PC-9 (cell line): ENCODE measurements at regions of chr16 and their contacts with region 1.

Region 1: GRCh38 chr16:23060458-23061320 is 88.6 kb downstream of the USP31 start:
- DNase-seq: peak; percentile 66 to 67
- H3K4me3 ChIP-seq: no peak overlapping the region
- H3K27ac ChIP-seq: no peak overlapping the region
- H3K4me1 ChIP-seq: no peaks in the 10 kb centered on the region
- H3K27me3 ChIP-seq: no peaks in the 10 kb centered on the region; the same call in 1 of the 2 replicates
- CTCF ChIP-seq: peak; percentile 85

Region 2: DNA sequence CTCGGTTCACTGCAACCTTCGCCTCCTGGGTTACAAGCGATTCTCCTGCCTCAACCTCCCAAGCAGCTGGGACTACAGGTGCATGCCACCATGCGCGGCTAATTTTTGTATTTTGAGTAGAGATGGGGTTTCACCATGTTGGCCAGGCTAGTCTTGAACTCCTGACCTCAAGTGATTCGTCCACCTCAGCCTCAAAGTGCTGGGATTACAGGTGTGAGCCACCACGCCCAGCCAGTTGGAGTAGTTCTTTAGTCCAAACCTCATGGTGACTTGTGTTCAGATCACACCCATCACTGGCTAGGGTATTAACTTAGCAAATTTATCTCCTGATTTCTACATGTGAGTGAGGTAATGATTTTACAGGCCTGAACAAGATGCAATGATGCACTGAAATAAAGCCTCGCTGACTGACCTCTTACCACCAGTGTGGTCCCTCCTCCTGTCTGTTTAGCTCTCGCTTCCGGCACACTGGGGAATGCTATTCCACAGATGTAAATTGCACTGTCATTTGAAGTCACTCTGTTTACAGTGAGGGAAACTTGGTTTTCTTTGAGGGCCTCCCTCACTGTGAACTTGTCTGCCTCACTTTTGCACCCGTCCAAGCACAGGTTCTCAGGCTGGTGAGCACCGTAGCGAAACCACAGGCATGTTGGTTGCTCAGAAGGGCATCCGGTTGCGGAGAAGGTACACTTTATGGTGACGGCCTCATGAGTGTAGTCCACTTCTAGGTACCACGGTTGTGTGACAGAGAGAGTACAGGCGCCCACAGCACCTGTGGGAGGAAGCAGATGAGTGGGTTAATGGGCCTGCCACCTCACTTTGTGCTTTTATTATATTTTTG is 1413.7 kb before region 1 on chr16:
- CTCF ChIA-PET with region 1: no interaction called
- POLR2A ChIA-PET with region 1: no interaction called
- intact Hi-C with region 1: loop called (anchors 5 kb)
- DNase-seq: no peak
- H3K4me3 ChIP-seq: no peak overlapping the region
- H3K27ac ChIP-seq: no peak overlapping the region
- H3K4me1 ChIP-seq: no peaks in the 10 kb centered on the region
- H3K27me3 ChIP-seq: no peaks in the 10 kb centered on the region
- CTCF ChIP-seq: no peak

Region 3: DNA sequence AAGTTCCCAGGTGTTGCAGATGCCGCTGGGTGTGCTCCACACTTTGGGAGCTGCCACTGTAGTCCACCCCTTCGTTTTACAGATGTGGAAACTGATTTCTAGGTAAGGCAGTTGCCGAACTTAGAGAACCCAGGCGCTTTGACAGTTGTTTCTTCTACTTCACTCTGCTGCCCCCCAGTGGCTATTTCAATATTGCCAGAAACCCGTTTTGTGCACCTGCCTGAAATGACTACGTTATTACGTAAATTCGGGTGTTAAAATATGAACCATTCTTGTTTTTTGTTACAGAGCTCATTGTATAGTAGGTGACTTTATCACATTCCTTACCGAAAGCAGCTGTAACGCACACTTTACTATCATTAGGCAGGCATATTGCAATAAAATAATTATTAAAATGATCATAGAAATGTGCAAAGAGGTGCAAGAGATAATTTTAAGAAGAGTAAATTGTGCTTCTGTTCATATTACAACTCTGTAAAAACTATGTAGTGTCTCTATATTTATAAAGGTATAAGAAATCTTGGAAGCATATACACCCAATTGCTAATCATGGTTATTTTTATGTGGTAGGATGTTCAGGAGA is 1352.1 kb before region 1 on chr16:
- CTCF ChIA-PET with region 1: no interaction called
- POLR2A ChIA-PET with region 1: no interaction called
- intact Hi-C with region 1: loop called (anchors 1 kb)
- DNase-seq: peak; percentile 61 to 70
- H3K4me3 ChIP-seq: no peak overlapping the region
- H3K27ac ChIP-seq: no peak overlapping the region
- H3K4me1 ChIP-seq: no peaks in the 10 kb centered on the region
- H3K27me3 ChIP-seq: no peaks in the 10 kb centered on the region
- CTCF ChIP-seq: peak; percentile 87

Region 4: DNA sequence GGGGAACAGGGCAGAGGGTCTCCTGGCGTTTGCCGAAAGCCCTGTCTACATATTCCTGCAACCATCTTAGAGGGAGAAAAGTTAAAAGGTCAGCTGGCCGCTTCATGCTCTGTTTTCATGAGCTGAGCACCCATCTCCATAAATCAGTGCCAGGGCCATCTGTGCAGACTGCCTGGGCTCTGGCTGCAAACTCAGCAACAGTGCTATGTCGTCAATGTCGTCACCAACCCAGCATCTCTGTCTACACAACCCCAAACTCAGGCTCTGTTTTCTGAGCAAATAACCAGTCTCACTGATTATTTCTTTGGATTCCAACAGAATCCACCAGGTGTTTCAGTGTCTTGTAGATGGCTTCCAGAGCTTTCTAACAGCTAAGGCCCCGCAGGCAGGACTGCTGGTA is 181.7 kb before region 1 on chr16:
- CTCF ChIA-PET with region 1: no interaction called
- POLR2A ChIA-PET with region 1: no interaction called
- intact Hi-C with region 1: no loop called
- DNase-seq: no peak
- H3K4me3 ChIP-seq: no peak overlapping the region
- H3K27ac ChIP-seq: no peak overlapping the region
- H3K4me1 ChIP-seq: no peaks in the 10 kb centered on the region
- H3K27me3 ChIP-seq: peaks cover 77% of the 10 kb centered on the region
- CTCF ChIP-seq: no peak

Region 5: GRCh38 chr16:22898874-22899348 is 161.8 kb before region 1 on chr16:
- CTCF ChIA-PET with region 1: no interaction called
- POLR2A ChIA-PET with region 1: no interaction called
- intact Hi-C with region 1: loop called (anchors 5 kb)
- DNase-seq: peak; percentile 39 to 63
- H3K4me3 ChIP-seq: no peak overlapping the region
- H3K27ac ChIP-seq: no peak overlapping the region
- H3K4me1 ChIP-seq: no peaks in the 10 kb centered on the region
- H3K27me3 ChIP-seq: peaks cover 64% of the 10 kb centered on the region
- CTCF ChIP-seq: peak; percentile 82